HAP-1 (cell line): ENCODE measurements at regions of chr11 and their contacts with region 1.

Region 1: GRCh38 chr11:72573072-72573854 is 101.0 kb downstream of the PDE2A start:
- DNase-seq: peak; percentile 36 to 71
- H3K4me3 ChIP-seq: no peak overlapping the region
- H3K4me1 ChIP-seq: peaks cover 5% of the 10 kb centered on the region
- H3K27me3 ChIP-seq: peaks cover 2% of the 10 kb centered on the region; the same call in 1 of the 2 replicates

Region 2: DNA sequence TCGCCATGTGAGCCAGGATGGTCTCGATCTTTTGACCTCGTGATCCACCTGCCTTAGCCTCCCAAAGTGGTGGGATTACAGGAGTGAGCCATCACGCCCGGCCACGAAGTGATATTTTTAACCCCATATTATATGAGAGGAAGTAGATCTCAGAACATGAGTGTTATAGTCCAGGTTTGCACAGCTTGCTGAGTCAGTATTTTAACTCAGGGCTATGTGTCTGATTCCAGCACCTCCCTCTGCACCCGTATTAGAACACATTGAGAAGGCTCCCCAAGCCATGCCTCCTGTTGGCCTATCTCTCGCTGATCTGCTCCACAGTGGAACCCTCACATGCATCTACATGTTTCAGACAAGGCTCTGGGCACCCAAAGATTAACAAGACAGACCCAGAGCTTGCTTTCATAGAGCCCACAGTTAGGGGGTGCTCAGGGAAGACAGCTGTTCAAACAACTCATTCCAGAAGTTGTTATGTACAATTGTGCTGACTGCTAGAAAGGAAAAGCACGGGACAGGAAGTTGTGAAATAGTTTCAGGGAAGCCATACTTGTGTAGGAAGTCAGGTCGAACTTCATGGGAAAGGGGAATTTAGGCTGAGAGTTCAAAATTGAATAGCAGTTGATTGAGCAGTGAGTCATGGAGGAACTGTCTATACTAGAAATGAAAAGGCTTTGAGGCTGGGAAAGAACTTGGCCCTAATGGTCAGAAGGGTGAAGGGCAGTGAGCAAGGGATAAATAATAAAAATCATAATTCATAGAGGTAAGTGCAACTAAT is 89.7 kb before region 1 on chr11:
- in situ Hi-C with region 1: loop called (anchors 5 kb)
- DNase-seq: no peak
- H3K4me3 ChIP-seq: no peak overlapping the region
- H3K4me1 ChIP-seq: no peaks in the 10 kb centered on the region
- H3K27me3 ChIP-seq: no peaks in the 10 kb centered on the region